HEK293 (cell line): ENCODE measurements at regions of chr7 and their contacts with region 1.

Region 1: GRCh38 chr7:107150375-107151073 is 18.3 kb upstream of the HBP1 start:
- H3K4me3 ChIP-seq: no peak overlapping the region
- H3K27ac ChIP-seq: no peak overlapping the region
- H3K4me1 ChIP-seq: no peaks in the 10 kb centered on the region
- CTCF ChIP-seq: 0 out of 2 replicates have a peak, but pooled peaks have one; percentile 10

Region 2: DNA sequence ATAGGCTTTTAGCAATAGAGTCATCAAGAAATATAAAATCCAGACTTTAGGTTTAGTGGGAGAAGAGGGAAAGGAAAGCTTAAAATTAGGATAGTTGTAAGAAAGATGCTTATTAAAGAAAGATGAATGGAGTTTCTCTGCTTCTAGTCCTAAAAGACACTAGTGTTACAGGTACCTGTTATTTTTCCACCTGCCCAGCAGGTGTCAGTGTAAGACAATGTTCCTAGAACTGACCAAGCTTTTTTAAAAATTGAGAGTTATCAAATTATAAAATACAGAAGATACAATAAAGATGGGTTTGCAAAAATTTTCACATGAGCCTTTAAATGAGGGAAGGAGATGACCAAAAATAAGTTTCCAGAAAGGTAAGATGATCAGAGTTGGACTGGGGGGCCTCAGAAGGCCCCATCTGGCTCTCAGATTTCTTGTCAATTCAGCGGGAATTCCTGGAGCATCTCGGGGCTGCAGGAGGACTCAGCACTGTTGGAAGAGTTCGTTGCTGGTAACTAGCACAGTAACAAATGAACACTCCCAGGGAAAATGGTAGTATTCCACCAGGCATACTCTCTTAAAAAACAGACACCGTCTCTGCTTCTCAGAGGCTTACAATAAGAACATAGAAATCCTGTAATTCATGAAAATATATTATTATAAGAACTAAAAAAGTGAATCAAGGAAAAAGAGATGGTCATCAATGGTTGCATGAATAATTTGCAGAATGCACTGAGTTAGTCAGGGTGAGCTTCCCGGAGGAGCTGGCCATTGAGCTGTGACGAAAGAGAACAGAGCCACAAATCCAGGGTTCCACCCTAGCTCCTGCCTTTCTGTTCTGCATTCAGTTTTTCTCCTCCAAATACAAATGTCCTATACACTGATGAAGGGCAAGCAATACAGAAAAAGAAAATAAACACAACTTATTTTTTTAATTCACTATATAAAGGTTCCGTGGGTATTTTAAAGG is 357.2 kb before region 1 on chr7:
- CTCF ChIA-PET with region 1: interaction called, 18 read pairs
- POLR2A ChIA-PET with region 1: no interaction called
- H3K4me3 ChIP-seq: no peak overlapping the region
- H3K27ac ChIP-seq: no peak overlapping the region
- H3K4me1 ChIP-seq: no peaks in the 10 kb centered on the region
- CTCF ChIP-seq: no peak

Region 3: GRCh38 chr7:106947244-106947728 is 203.2 kb before region 1 on chr7:
- CTCF ChIA-PET with region 1: interaction called, 191 read pairs
- POLR2A ChIA-PET with region 1: no interaction called
- H3K4me3 ChIP-seq: no peak overlapping the region
- H3K27ac ChIP-seq: no peak overlapping the region
- H3K4me1 ChIP-seq: no peaks in the 10 kb centered on the region
- CTCF ChIP-seq: peak; percentile 40; the same call in 1 of the 2 replicates

Region 4: GRCh38 chr7:107047902-107048782 is 102.4 kb before region 1 on chr7:
- CTCF ChIA-PET with region 1: interaction called, 15 read pairs
- POLR2A ChIA-PET with region 1: no interaction called
- H3K4me3 ChIP-seq: no peak overlapping the region
- H3K27ac ChIP-seq: no peak overlapping the region
- H3K4me1 ChIP-seq: peaks cover 4% of the 10 kb centered on the region; the same call in 1 of the 2 replicates
- CTCF ChIP-seq: no peak

Region 5: GRCh38 chr7:107130487-107131225 is 19.9 kb before region 1 on chr7:
- CTCF ChIA-PET with region 1: interaction called, 11 read pairs
- POLR2A ChIA-PET with region 1: no interaction called
- H3K4me3 ChIP-seq: no peak overlapping the region
- H3K27ac ChIP-seq: no peak overlapping the region
- H3K4me1 ChIP-seq: no peaks in the 10 kb centered on the region
- CTCF ChIP-seq: no peak